Activated T-helper 1 cell treated with anti-CD3 and anti-CD28 coated beads, Interleukin-12 subunit alpha, Interleukin-12 subunit beta, Interleukin-2, Interleukin-4 antibody, amounts not matched to agents 30 ng/mL and 10 ng/mL and 1 ng/mL, durations not matched to agents 14 hours and 24 hours and 36 hours (primary cell): ENCODE measurements at regions of chrX and their contacts with region 1.

Region 1: GRCh38 chrX:38327007-38327774 is at the start of gene RPGR:
- DNase-seq: peak; percentile 86
- H3K4me3 Mint-ChIP-seq: peak within 1 kb of the TSS; percentile 92
- H3K27ac Mint-ChIP-seq: peak within 1 kb of the TSS; percentile 96
- H3K4me1 Mint-ChIP-seq: peaks cover 8% of the 10 kb centered on the region
- H3K27me3 Mint-ChIP-seq: no peaks in the 10 kb centered on the region
- total RNA-seq, gene RPGR: 7.5 and 9.3 TPM in 2 replicates

Region 2: GRCh38 chrX:37745354-37745753 is 581.8 kb before region 1 on chrX:
- intact Hi-C with region 1: loop called (anchors 1 kb)
- DNase-seq: peak; percentile 47
- H3K4me3 Mint-ChIP-seq: no peak overlapping the region
- H3K27ac Mint-ChIP-seq: peak overlapping the region; percentile 78
- H3K4me1 Mint-ChIP-seq: peaks cover 26% of the 10 kb centered on the region
- H3K27me3 Mint-ChIP-seq: peaks cover 12% of the 10 kb centered on the region

Region 3: DNA sequence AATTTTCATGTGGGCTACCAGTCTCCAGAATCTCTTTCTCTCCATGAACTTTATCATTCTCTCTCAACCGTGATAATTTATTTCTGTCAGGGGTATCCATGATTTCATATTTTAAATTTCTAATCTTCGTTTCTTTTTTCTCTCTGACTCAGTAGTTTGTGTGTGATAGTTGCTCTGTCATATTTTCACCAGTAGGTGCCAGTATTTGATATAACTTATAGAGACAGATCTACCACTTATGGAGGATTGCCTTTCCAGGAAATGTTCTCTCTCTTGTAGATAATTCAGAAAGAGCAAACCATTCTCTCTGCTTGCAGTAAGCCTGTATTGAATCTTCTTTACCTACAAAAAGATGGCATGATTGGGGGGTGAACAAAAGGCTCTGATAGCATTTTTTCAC is 400.5 kb before region 1 on chrX:
- intact Hi-C with region 1: loop called (anchors 1 kb)
- DNase-seq: no peak
- H3K4me3 Mint-ChIP-seq: no peak overlapping the region
- H3K27ac Mint-ChIP-seq: no peak overlapping the region
- H3K4me1 Mint-ChIP-seq: no peaks in the 10 kb centered on the region
- H3K27me3 Mint-ChIP-seq: peaks cover 5% of the 10 kb centered on the region

Region 4: DNA sequence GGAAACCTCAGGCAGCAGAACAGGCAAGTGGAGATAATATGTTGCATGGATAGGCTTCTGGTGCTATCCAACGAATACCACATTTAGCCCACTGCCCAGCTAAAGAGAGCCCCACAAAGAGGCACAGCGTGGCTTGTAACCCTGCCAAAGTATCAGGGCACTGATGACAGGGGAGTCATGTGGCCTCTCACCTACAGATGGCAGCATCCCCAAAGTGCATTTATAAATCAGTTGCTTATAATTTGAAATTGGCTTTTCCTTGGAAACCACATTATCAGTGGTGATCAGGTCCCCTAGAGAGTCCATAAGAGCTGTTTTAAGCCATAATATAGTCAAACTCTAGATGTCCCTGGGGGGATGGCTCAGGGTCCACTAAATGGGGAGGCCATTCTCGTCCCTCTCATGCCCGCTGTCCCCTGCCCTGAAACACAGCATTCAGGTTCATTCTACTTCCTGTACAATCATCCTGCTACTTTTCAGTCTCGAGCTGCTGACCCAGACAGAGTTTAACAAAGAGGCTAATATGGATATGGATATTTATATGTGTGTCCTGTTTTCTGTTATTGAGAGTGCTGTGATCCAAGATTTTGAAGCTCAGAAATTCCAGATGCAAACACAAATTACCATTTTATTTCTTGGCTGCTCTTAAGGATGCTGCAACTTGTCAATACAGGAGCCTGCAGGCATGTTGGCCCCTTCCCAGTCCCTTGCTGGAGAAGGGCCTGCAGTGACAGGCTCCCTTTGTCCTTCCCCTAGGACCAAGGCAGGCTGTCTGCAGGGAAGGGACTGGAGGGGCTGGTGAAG is 135.0 kb before region 1 on chrX:
- intact Hi-C with region 1: loop called (anchors 1 kb)
- DNase-seq: no peak
- H3K4me3 Mint-ChIP-seq: no peak overlapping the region
- H3K27ac Mint-ChIP-seq: no peak overlapping the region
- H3K4me1 Mint-ChIP-seq: no peaks in the 10 kb centered on the region
- H3K27me3 Mint-ChIP-seq: peaks cover 8% of the 10 kb centered on the region

Region 5: DNA sequence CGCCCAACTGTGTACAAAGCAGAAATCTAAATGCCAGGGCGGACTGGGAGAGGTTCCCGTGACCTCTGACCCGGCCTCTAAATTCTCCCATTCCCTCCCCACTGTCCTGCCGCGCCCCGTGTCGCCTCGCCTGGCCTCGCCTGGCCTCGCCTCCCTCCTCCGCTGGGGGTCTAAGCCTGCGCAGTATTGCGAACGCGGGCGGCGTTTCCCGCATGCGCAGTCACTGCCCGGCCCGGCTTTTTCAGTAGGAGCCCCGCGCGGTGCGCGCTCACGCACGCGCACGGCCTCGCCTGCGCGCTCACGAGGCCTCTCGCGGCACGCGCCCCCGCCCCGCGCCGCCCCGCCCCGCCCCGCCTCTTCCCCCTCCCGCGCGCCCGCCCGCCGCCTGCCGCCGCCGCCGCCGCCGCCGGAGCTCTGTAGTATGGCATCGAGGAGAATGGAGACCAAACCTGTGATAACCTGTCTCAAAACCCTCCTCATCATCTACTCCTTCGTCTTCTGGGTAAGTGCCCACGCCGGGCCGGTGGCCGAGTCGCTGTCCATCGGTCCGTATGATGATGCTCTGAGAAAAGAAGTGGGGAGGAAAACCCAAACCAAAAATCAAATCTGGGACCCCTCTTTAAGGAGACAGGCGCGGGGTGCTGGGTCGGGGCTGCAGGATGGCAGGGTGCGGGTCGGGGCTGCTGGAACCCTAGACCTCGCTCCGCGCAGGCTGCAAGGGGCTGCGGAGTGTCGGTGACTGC is 234.1 kb after region 1 on chrX and contains the start of gene TSPAN7:
- intact Hi-C with region 1: loop called (anchors 10 kb)
- DNase-seq: peak; percentile 61
- H3K4me3 Mint-ChIP-seq: peak within 1 kb of the TSS; percentile 82
- H3K27ac Mint-ChIP-seq: no peak within 1 kb of the TSS
- H3K4me1 Mint-ChIP-seq: no peaks in the 10 kb centered on the region
- H3K27me3 Mint-ChIP-seq: peaks cover 10% of the 10 kb centered on the region
- total RNA-seq, gene TSPAN7: 0.54 TPM in 1 of 2 replicates, not detected in the other